ENCODE measurements at regions of chr2 and their contacts with region 1.

Region 1: DNA sequence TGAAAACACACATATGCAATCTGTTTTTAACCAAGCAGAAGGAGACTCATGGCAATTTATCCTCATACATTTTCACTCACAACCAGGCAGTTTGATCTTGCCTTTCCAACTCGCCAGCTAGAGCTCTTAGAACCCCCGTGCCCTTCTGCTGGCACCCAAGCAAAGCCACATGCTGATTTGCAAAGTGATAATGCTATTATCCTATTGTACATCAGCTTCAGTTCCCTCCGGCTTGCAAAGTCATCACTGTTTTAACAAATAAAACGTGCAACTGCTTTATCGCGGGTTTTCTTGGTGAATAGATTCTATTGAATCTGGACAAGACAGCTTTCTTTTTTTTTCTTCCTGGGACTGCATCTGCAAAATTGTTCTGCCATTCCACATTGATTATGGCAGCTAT is 314.6 kb downstream of the LNPK start:
- DNase-seq: no peak
- H3K4me3 ChIP-seq: no peak overlapping the region
- CTCF ChIP-seq: no peak
- POLR2A ChIP-seq: no peak

Region 2: GRCh38 chr2:175203621-175204496 is 483.6 kb before region 1 on chr2:
- intact Hi-C with region 1: no loop called
- DNase-seq: no peak
- H3K4me3 ChIP-seq: no peak overlapping the region
- CTCF ChIP-seq: no peak
- POLR2A ChIP-seq: no peak

Region 3: GRCh38 chr2:176088048-176088936 is 400.8 kb after region 1 on chr2:
- intact Hi-C with region 1: loop called (anchors 5 kb)
- DNase-seq: peak in 1 of 2 donors; percentile 92
- H3K4me3 ChIP-seq: no peak overlapping the region
- CTCF ChIP-seq: no peak
- POLR2A ChIP-seq: no peak

Region 4: DNA sequence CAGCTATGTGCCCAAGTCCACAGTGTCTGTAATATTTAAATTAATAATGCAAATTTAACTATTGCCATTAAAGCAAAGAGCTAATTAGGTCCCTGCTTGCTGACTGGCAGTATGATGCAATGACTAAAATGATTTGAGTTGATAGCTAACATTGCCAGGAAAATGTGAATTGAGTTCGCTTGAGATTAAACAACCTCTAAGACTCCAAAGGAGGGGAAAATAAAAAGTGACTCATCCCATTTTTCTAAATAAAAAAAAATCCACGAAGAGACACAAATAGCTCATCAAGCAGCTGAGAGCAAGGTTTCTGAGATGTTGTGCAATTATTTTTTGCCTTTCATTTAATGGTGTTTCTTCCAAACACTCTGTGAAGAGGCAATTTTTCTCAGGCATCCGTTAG is 994.8 kb after region 1 on chr2:
- intact Hi-C with region 1: no loop called
- DNase-seq: no peak
- H3K4me3 ChIP-seq: no peak overlapping the region
- CTCF ChIP-seq: no peak
- POLR2A ChIP-seq: no peak

Measured in lower leg skin (tissue), 4 donors.